GM12878 (cell line): ENCODE measurements at regions of chr5 and their contacts with region 1.

Region 1: GRCh38 chr5:151080623-151081430 is at the start of gene TNIP1:
- DNase-seq: no peak
- ATAC-seq: peak; percentile 78
- H3K4me3 ChIP-seq: peak within 1 kb of the TSS; percentile 89
- H3K27ac ChIP-seq: peak within 1 kb of the TSS; percentile 90
- H3K4me1 ChIP-seq: peaks cover 44% of the 10 kb centered on the region
- H3K27me3 ChIP-seq: no peaks in the 10 kb centered on the region
- CTCF ChIP-seq: no peak
- EP300 ChIP-seq: no peak; a peak in 1 of 4 replicates
- POLR2A ChIP-seq: peak; percentile 89
- RAD21 ChIP-seq: no peak
- polyA plus RNA-seq, gene TNIP1: 4.4 to 13.7 TPM

Region 2: DNA sequence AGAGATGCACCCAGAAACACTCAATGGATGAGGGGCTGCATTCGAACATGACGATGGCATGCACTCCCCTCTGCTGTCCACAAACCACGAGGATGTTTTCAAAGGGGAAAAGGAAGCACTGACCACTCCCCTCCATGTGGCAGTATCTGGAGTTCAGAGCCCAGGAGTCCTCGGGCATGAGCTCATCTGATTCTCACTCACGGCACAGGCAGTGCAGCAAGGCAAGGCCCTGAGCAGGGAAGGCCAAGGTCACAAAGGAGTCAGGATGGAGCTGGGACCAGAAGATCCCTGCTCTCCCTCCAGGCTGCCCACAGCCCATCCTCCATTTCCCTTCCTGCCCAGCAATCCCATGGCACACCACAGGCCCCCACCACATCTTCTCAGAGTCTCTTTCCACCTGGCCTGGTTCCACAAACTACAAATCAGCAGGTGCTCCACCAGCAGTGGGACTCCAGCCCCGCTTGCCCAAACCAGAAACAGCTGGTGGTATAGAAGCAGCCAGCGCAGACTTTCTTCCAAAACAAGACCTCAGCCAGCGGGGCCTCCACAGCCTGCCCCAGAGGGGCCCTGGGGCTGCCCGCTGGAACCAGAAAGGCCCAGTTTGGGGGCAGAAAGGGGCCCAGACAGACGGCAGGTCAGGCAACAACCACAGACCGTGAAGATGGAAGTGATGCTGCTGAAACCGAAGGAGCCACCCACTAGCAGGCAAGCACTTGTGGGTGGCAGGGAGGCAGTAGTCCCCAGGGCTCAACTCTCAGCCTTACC is 12.2 kb before region 1 on chr5:
- CTCF ChIA-PET with region 1: interaction called, 10 read pairs
- POLR2A ChIA-PET with region 1: interaction called, 20 read pairs
- RAD21 ChIA-PET with region 1: interaction called, 19 read pairs
- SMC1A ChIA-PET with region 1: interaction called, 16 read pairs
- in situ Hi-C with region 1: no loop called
- intact Hi-C with region 1: no loop called
- DNase-seq: no peak
- ATAC-seq: peak; percentile 78
- H3K4me3 ChIP-seq: peak overlapping the region; percentile 6; the same call in 1 of the 2 replicates
- H3K27ac ChIP-seq: peak overlapping the region; percentile 65
- H3K4me1 ChIP-seq: peaks cover 77% of the 10 kb centered on the region
- H3K27me3 ChIP-seq: no peaks in the 10 kb centered on the region
- CTCF ChIP-seq: no peak
- EP300 ChIP-seq: peak in 1 of 2 experiments; percentile 16; a peak in 1 of 4 replicates
- POLR2A ChIP-seq: no peak; the same call in none of the 2 replicates
- RAD21 ChIP-seq: no peak

Region 3: GRCh38 chr5:151110122-151110681 is 29.4 kb after region 1 on chr5:
- CTCF ChIA-PET with region 1: interaction called, 90 read pairs
- POLR2A ChIA-PET with region 1: interaction called, 17 read pairs
- RAD21 ChIA-PET with region 1: interaction called, 90 read pairs
- SMC1A ChIA-PET with region 1: interaction called, 97 read pairs
- in situ Hi-C with region 1: no loop called
- intact Hi-C with region 1: loop called (anchors 5 kb)
- DNase-seq: no peak
- ATAC-seq: peak; percentile 69
- H3K4me3 ChIP-seq: no peak overlapping the region
- H3K27ac ChIP-seq: peak overlapping the region; percentile 72
- H3K4me1 ChIP-seq: peaks cover 25% of the 10 kb centered on the region
- H3K27me3 ChIP-seq: no peaks in the 10 kb centered on the region
- CTCF ChIP-seq: no peak; a peak in 3 of 6 replicates
- EP300 ChIP-seq: no peak
- POLR2A ChIP-seq: no peak; the same call in 1 of the 2 replicates
- RAD21 ChIP-seq: peak; percentile 42

Region 4: DNA sequence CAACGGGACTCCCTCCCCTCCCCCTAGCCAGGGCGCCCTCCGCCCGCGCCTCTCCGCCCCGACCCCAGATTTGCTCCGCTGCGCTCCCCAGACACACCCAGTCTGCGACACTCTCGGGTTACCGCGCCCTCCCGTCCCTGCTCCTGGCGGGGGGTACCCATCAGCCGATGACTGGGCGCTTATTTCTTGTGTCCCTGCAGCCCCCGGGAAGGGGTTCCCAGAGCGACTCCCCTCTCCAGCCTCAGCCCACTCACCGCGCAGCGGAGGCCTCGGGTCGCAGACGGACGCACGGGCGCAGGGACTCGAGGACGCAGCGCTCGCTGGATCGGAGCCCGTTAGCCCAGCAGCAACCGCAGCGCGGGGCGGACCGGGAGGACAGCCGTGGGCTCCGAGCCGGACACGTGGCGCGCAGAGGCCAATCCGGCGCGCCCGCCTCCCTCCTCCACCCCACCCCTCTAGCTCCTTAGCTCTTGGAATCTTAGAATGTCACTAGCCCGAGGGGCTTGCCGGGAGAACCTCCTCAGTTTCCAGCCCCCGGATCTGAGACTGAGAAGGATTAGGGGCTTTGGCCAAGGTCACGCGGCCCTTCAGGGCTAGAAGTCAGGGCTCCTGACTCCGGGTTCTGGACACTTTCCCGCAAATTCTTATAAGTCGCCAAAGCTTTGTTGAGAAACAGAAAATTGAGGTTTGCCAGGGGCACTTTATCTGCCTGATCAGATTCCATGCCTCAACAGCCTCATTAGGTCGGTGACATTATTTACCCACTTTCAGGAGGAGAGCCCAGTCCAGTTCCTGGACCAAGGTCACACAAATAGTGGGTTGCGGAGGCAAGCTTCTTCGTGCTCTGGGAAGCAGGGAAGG is 76.8 kb after region 1 on chr5 and contains the start of gene ANXA6:
- CTCF ChIA-PET with region 1: no interaction called
- POLR2A ChIA-PET with region 1: interaction called, 3 read pairs
- RAD21 ChIA-PET with region 1: interaction called, 9 read pairs
- SMC1A ChIA-PET with region 1: interaction called, 12 read pairs
- in situ Hi-C with region 1: no loop called
- intact Hi-C with region 1: loop called (anchors 2 kb)
- DNase-seq: no peak
- ATAC-seq: peak; percentile 77
- H3K4me3 ChIP-seq: peak within 1 kb of the TSS; percentile 97
- H3K27ac ChIP-seq: peak within 1 kb of the TSS; percentile 89
- H3K4me1 ChIP-seq: peaks cover 26% of the 10 kb centered on the region
- H3K27me3 ChIP-seq: no peaks in the 10 kb centered on the region
- CTCF ChIP-seq: no peak
- EP300 ChIP-seq: no peak
- POLR2A ChIP-seq: peak; percentile 81
- RAD21 ChIP-seq: no peak
- polyA plus RNA-seq, gene ANXA6: 44.0 to 73.1 TPM